ENCODE measurements at regions of chr13 and their contacts with region 1.

Region 1: GRCh38 chr13:52450012-52450792 is at the start of gene VPS36:
- DNase-seq: peak; percentile 93
- H3K4me3 ChIP-seq: peak within 1 kb of the TSS; percentile 74 to 99 (median 98)
- H3K27ac ChIP-seq: peak within 1 kb of the TSS; percentile 94
- H3K4me1 ChIP-seq: peaks cover 27% of the 10 kb centered on the region
- H3K27me3 ChIP-seq: no peaks in the 10 kb centered on the region
- CTCF ChIP-seq: peak; percentile 95 to 100
- POLR2A ChIP-seq: peak; percentile 61
- total RNA-seq, gene VPS36: 30.4 and 32.3 TPM in 2 replicates

Region 2: DNA sequence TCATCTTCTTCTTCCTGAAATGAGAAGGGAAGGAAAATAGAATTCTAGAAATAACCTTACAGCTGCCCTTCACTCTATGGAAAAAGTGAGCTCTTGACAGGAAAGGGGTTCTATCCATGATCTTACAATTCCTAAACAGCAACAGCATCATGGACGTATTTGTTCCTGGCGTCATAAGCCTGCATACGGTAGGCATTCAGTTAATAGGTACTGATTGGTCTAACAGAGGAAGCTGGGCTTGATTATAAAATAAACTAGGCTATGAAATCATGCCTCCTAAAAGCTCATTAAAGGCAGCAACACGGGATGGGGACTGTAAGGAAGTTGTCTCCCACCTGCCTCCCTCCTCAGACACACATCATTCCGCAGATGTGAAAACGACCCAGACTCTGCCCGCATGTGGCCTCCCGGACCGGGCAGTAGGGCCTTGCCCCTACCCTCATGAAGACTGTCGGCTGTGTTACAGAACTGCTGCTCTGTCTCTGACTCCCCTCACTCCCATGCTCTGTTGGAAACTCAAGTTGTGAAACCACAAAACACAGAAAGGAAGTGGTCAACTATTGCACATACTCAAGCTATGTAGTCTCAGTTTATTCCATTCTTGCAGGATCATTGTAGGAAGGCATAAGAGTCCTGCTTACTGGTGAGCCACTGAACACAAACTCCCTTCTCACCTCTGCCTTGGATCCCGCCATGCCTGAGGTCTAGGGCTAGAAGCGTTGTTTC is 1736.5 kb before region 1 on chr13:
- CTCF ChIA-PET with region 1: no interaction called
- POLR2A ChIA-PET with region 1: no interaction called
- dilution Hi-C with region 1: no loop called
- intact Hi-C with region 1: no loop called
- DNase-seq: no peak
- H3K4me3 ChIP-seq: no peak overlapping the region
- H3K27ac ChIP-seq: no peak overlapping the region
- H3K4me1 ChIP-seq: no peaks in the 10 kb centered on the region
- H3K27me3 ChIP-seq: peaks cover 2 to 12% of the 10 kb centered on the region in 2 experiments
- CTCF ChIP-seq: no peak
- POLR2A ChIP-seq: no peak

Region 3: DNA sequence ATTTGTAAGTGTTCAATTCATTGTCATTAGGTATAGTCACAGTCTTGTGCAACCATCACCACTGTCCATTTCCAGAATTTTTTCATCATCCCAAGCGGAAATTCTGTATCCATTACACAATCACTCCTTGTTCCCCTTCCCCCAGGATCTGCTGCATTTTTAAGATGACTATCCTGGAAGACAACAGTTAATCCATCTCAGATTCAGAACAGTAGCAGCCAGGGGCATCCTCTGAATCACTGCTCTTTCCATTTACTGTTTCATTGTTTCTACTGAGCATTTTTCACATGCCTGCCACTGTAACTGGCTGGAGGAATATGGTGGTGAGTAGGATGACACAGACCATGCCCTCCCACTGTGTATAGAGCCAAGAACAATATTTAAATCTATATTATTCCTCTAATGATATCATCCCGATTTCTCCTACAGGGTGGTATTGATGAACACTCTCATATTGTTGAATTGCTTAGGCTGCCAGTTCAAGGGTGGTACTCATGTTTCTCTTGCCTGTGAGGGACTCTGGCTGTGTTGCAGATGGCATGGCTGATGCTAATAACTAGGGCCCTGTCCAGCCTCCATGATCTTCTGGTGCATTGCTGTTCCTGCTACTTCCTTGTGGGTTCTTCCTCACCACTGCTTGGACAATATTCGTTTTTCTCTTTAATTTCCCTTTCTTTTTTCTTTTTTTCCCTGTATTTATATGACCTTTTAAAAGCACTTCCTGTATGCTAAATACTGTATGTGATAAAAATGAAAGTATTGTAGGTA is 806.9 kb before region 1 on chr13:
- CTCF ChIA-PET with region 1: no interaction called
- POLR2A ChIA-PET with region 1: no interaction called
- dilution Hi-C with region 1: no loop called
- intact Hi-C with region 1: no loop called
- DNase-seq: peak; percentile 62
- H3K4me3 ChIP-seq: peak overlapping the region in 1 of 3 experiments; percentile 35
- H3K27ac ChIP-seq: peak overlapping the region; percentile 87
- H3K4me1 ChIP-seq: peaks cover 28% of the 10 kb centered on the region
- H3K27me3 ChIP-seq: no peaks in the 10 kb centered on the region
- CTCF ChIP-seq: no peak
- POLR2A ChIP-seq: no peak

Region 4: GRCh38 chr13:52001120-52001731 is 449.0 kb before region 1 on chr13:
- CTCF ChIA-PET with region 1: interaction called, 6 read pairs
- POLR2A ChIA-PET with region 1: no interaction called
- dilution Hi-C with region 1: no loop called
- intact Hi-C with region 1: loop called (anchors 1 kb)
- DNase-seq: peak; percentile 38
- H3K4me3 ChIP-seq: no peak overlapping the region
- H3K27ac ChIP-seq: no peak overlapping the region
- H3K4me1 ChIP-seq: no peaks in the 10 kb centered on the region
- H3K27me3 ChIP-seq: peaks cover 10 to 11% of the 10 kb centered on the region in 2 experiments
- CTCF ChIP-seq: peak; percentile 42 to 61
- POLR2A ChIP-seq: no peak

Region 5: DNA sequence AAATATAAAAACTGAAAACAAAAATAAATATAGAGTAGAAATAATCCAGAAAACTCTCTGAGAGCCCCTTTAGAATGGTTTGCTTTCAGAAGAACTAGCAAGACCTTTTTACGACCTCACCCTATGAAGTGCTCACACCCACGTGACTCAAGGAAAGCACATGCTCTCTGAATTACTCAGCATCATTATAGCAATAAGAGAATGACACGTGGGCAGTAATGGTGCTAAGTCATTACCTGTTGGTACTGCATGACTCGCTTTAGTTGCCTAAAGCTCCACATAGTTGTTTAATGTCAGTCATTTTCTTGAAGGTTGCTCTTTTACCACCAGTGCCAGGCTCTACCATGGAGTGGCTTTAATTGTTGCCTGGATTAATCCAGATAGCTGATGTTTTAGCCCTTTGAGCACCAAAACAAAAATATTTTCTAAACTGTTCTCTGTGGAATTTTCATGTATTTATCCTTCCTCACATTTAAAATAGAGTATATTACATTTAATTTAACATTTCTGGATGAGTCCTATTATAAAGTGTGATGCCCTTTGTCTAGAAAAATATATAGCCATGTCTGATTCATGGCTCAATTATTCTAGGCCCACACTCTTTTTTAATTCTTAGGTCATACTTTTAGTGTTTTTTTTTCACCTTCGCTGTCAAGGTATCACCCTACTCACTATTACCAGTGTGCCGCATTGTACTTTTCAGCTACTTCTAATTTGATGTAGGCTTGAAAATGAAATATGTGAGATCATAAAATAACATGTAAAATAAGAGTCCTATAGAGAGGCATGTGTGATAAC is 101.0 kb before region 1 on chr13:
- CTCF ChIA-PET with region 1: interaction called, 210 read pairs
- POLR2A ChIA-PET with region 1: interaction called, 4 read pairs
- dilution Hi-C with region 1: no loop called
- intact Hi-C with region 1: no loop called
- DNase-seq: peak; percentile 51
- H3K4me3 ChIP-seq: no peak overlapping the region
- H3K27ac ChIP-seq: no peak overlapping the region
- H3K4me1 ChIP-seq: peaks cover 21% of the 10 kb centered on the region
- H3K27me3 ChIP-seq: no peaks in the 10 kb centered on the region
- CTCF ChIP-seq: no peak
- POLR2A ChIP-seq: no peak

Region 6: DNA sequence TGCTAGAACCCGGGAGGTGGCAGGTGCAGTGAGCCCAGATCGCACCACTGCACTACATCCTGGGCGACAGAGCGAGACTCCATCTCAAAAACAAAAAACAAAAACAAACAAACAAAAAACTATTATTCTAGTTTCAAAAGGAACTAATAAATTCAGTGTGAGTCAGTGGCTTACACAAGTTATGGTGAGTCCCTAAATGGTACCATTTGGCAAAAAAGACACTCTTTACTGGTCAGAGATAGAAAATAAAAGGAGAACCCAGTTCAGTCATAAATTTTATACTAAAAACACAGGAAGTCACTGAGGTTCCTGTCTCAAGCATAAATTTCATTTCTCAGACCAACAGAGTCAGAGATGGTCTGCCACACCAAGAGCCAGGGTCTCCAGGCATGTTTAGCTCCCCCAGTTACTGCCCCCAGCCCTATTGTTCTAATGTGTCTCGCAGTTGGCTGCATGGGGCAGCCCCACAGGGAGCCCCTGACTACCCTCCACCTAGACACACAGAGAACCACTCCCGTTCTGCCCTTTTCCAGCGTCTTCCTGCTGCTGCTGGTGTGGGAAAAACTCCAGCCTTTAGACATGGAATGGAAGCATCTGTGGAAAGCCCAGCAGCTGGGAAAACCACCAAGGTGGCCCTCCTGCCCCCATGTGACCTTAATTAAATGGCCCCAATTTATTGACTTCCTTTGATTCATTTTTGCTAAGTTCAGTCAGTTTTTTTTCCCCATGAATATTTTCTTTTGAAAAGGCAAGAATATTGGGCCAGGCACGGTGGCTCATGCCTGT is 56.4 kb before region 1 on chr13:
- CTCF ChIA-PET with region 1: interaction called, 50 read pairs
- POLR2A ChIA-PET with region 1: no interaction called
- dilution Hi-C with region 1: no loop called
- intact Hi-C with region 1: no loop called
- DNase-seq: peak; percentile 87
- H3K4me3 ChIP-seq: no peak overlapping the region
- H3K27ac ChIP-seq: no peak overlapping the region
- H3K4me1 ChIP-seq: peaks cover 8% of the 10 kb centered on the region
- H3K27me3 ChIP-seq: no peaks in the 10 kb centered on the region
- CTCF ChIP-seq: no peak
- POLR2A ChIP-seq: no peak

Region 7: DNA sequence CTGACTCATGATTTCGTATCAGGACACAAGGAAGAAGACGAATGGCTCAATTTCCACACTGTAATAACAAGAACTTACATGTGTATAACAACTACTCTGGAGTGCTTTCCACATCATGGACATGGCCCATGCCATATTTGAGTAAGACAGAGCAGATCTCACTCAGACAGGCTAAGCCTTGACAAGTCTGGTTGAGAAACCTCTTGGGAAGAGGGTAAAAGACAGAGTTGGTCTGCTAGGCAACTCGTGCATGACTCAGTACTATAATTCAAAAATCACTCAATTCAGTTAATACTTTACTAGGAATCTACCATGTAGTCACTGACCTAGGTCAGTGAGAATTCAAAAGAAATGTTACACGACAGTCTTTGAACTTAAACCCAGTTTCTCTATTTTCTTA is 38.6 kb before region 1 on chr13:
- CTCF ChIA-PET with region 1: interaction called, 142 read pairs
- POLR2A ChIA-PET with region 1: interaction called, 4 read pairs
- dilution Hi-C with region 1: no loop called
- intact Hi-C with region 1: no loop called
- DNase-seq: no peak
- H3K4me3 ChIP-seq: no peak overlapping the region
- H3K27ac ChIP-seq: no peak overlapping the region
- H3K4me1 ChIP-seq: peaks cover 17% of the 10 kb centered on the region
- H3K27me3 ChIP-seq: no peaks in the 10 kb centered on the region
- CTCF ChIP-seq: no peak
- POLR2A ChIP-seq: no peak

Region 8: GRCh38 chr13:52652196-52652979 is 202.2 kb after region 1 on chr13 and contains the start of gene SUGT1:
- CTCF ChIA-PET with region 1: interaction called, 5 read pairs
- POLR2A ChIA-PET with region 1: no interaction called
- dilution Hi-C with region 1: no loop called
- intact Hi-C with region 1: loop called (anchors 1 kb)
- DNase-seq: peak; percentile 98
- H3K4me3 ChIP-seq: peak within 1 kb of the TSS; percentile 67 to 100 (median 100)
- H3K27ac ChIP-seq: peak within 1 kb of the TSS; percentile 84
- H3K4me1 ChIP-seq: peaks cover 22% of the 10 kb centered on the region
- H3K27me3 ChIP-seq: no peaks in the 10 kb centered on the region
- CTCF ChIP-seq: peak; percentile 59 to 71
- POLR2A ChIP-seq: peak; percentile 95
- total RNA-seq, gene SUGT1: 74.2 and 78.8 TPM in 2 replicates

Region 9: DNA sequence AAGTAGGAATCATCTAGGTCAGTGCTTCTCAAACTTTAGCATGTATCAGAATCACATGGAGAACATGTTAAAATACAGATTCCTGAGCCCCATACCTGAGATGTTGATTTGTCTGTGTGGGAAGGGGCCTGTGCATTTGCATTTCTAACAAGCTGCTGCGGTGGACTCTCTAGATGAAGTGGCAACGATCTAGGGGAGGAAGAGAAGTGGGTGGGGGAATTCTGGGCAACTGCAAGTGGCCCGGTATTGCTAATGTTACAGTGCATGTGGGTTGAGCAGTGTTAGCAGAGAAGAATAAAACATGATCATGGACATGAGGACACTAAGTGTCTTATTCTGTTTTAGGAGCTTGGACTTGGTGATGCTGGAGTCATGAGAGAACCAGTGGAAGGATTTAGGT is 907.4 kb after region 1 on chr13:
- CTCF ChIA-PET with region 1: no interaction called
- POLR2A ChIA-PET with region 1: no interaction called
- dilution Hi-C with region 1: no loop called
- intact Hi-C with region 1: no loop called
- DNase-seq: no peak
- H3K4me3 ChIP-seq: no peak overlapping the region
- H3K27ac ChIP-seq: no peak overlapping the region
- H3K4me1 ChIP-seq: no peaks in the 10 kb centered on the region
- H3K27me3 ChIP-seq: no peaks in the 10 kb centered on the region
- CTCF ChIP-seq: no peak
- POLR2A ChIP-seq: no peak

Measured in endothelial cell of umbilical vein (primary cell).